ENCODE measurements at regions of chr12 and their contacts with region 1.

Region 1: GRCh38 chr12:63068857-63069442 is 82.1 kb downstream of the AVPR1A start:
- DNase-seq: peak; percentile 56
- H3K4me3 ChIP-seq: no peak overlapping the region
- CTCF ChIP-seq: peak; percentile 36

Region 2: GRCh38 chr12:62799126-62799736 is 269.7 kb before region 1 on chr12:
- CTCF ChIA-PET with region 1: interaction called, 281 read pairs
- POLR2A ChIA-PET with region 1: no interaction called
- DNase-seq: no peak
- H3K4me3 ChIP-seq: no peak overlapping the region
- CTCF ChIP-seq: peak; percentile 82

Region 3: DNA sequence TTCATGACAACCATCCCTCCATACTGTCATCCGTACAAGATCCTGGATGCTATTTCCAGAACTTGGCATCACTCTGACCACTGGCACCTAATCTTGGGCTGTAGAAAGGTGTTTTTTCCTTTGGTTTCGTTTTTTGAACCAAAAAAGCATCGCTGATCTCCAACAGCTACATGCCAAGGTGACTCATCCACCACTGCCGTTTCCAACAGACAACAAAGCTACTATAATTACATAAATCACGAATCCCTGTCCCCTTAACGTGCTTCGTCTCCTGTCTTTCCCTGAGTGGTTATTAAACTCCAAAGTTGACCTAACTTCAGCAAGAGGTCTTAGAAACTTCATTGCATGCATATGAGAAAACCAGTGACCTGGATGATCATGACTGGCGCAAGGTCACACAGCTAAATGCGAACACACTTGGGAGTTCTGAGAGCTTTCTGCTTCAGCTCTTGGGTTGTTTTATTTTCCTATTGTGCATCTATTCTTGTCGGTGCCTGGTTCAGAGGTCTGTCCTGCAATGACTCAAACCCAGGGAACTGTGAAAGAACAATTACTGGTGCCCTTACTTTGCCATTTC is 233.9 kb before region 1 on chr12:
- CTCF ChIA-PET with region 1: interaction called, 10 read pairs
- POLR2A ChIA-PET with region 1: no interaction called
- DNase-seq: no peak
- H3K4me3 ChIP-seq: no peak overlapping the region
- CTCF ChIP-seq: no peak

Region 4: GRCh38 chr12:62866451-62867082 is 202.4 kb before region 1 on chr12:
- CTCF ChIA-PET with region 1: interaction called, 13 read pairs
- POLR2A ChIA-PET with region 1: no interaction called
- DNase-seq: peak; percentile 62
- H3K4me3 ChIP-seq: no peak overlapping the region
- CTCF ChIP-seq: no peak

Region 5: DNA sequence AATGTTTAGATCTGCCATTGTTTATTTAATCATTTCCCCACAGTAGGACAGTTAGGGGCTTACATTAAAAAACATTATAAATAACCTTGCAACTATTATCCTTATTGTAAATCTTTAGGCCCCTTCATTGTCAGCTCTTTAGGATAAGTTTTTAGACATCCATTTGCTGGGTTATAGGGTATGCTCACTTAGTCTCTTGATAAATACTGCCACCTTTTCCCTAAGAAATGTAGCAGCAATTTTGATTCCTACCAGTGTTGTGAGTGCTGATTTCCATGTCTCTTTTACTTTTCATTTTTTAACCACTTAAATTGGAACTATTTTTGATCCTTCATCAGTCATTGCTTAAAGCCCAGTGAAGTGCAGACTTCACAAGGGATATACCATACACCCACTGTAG is 12.3 kb before region 1 on chr12:
- CTCF ChIA-PET with region 1: interaction called, 12 read pairs
- POLR2A ChIA-PET with region 1: no interaction called
- DNase-seq: no peak
- H3K4me3 ChIP-seq: no peak overlapping the region
- CTCF ChIP-seq: no peak

Measured in AG04449 (cell line).